Endothelial cell of umbilical vein (primary cell): ENCODE measurements at regions of chr22 and their contacts with region 1.

Region 1: GRCh38 chr22:38230108-38230825 is 28.5 kb downstream of the MAFF start:
- DNase-seq: peak; percentile 85
- H3K4me3 ChIP-seq: no peak overlapping the region
- H3K27ac ChIP-seq: peak overlapping the region; percentile 77
- H3K4me1 ChIP-seq: peaks cover 41% of the 10 kb centered on the region
- H3K27me3 ChIP-seq: no peaks in the 10 kb centered on the region
- CTCF ChIP-seq: peak; percentile 59 to 70
- POLR2A ChIP-seq: no peak

Region 2: DNA sequence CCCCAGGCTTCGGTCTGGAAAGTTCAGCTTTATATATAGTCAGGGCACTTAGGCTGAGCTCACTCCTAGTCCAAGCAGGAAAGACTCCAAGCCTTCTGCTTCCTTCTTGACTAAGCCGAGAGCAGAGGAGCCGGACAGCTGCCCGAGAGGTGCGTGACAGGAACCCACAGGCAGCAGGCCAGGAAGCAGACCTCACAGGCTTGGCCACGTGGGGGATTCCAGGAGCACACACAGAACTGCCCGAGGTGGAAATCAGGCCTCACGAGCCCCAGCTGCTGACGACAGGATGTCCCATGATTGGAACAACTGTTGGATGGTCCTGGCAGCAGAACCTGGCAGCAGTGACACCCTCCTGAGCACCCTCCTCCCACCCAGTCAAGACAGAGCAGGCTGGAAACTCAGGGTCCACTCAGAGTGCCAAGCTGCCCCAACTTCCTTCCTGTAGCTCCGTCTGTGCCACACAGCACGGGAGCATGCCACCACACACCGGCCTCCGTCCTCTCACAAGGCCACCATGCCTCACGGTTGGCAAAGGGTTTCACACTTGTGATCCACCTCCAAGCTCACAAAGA is 54.0 kb before region 1 on chr22:
- CTCF ChIA-PET with region 1: interaction called, 5 read pairs
- POLR2A ChIA-PET with region 1: no interaction called
- dilution Hi-C with region 1: no loop called
- intact Hi-C with region 1: loop called (anchors 2 kb)
- DNase-seq: peak; percentile 99
- H3K4me3 ChIP-seq: no peak overlapping the region
- H3K27ac ChIP-seq: peak overlapping the region; percentile 99
- H3K4me1 ChIP-seq: peaks cover 69% of the 10 kb centered on the region
- H3K27me3 ChIP-seq: no peaks in the 10 kb centered on the region
- CTCF ChIP-seq: no peak
- POLR2A ChIP-seq: no peak

Region 3: DNA sequence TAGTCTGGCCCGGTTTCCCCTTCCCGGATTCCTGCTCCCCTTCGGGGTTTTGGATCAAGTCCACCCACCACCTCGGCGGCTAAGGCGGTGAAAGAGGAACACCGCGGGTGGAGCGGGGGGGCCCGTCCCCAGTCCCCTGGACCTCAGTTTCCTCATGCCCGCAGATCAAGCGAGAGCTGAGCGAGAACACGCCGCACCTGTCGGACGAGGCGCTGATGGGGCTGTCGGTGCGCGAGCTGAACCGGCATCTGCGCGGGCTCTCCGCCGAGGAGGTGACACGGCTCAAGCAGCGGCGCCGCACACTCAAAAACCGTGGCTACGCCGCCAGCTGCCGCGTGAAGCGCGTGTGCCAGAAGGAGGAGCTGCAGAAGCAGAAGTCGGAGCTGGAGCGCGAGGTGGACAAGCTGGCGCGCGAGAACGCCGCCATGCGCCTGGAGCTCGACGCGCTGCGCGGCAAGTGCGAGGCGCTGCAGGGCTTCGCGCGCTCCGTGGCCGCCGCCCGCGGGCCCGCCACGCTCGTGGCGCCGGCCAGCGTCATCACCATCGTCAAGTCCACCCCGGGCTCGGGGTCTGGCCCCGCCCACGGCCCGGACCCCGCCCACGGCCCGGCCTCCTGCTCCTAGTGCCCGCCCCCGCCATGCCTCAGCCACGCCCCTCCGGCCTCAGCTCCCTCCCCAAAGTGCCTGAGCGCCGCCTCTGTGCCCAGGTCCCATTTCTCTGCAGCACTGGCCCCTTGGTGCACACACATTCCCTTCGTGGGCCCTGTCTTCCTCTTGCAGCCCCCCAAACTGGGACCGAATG is 15.8 kb before region 1 on chr22:
- CTCF ChIA-PET with region 1: interaction called, 44 read pairs
- POLR2A ChIA-PET with region 1: interaction called, 3 read pairs
- dilution Hi-C with region 1: no loop called
- intact Hi-C with region 1: loop called (anchors 1 kb)
- DNase-seq: peak; percentile 50
- H3K4me3 ChIP-seq: no peak overlapping the region
- H3K27ac ChIP-seq: no peak overlapping the region
- H3K4me1 ChIP-seq: peaks cover 27% of the 10 kb centered on the region
- H3K27me3 ChIP-seq: no peaks in the 10 kb centered on the region
- CTCF ChIP-seq: no peak
- POLR2A ChIP-seq: no peak

Region 4: DNA sequence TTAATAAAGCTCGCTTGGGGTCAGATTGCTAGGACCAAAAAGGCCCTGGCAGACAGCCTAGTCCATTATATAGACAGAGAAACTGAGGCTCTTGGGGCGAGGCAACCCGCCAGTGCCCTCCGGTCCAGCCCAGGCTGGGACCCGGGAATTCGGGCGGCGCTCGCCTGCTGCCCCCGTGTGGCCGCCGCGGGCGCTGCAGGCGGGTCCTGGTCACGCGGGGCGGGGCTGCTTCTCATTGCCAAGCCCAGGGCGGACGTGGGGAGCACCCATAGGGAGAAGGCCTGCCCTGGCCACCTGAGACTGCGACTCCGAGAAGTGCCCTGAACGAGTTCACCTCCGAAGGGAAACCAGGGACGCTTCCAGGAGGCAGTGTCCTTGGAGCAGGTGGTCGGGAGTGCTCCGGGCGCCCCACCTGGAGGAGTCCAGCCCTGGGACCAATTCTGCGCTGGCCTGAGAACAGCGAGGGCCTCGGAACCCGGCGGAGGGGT is 122.9 kb after region 1 on chr22:
- CTCF ChIA-PET with region 1: interaction called, 3 read pairs
- POLR2A ChIA-PET with region 1: no interaction called
- dilution Hi-C with region 1: no loop called
- intact Hi-C with region 1: loop called (anchors 10 kb)
- DNase-seq: peak; percentile 48
- H3K4me3 ChIP-seq: no peak overlapping the region
- H3K27ac ChIP-seq: no peak overlapping the region
- H3K4me1 ChIP-seq: no peaks in the 10 kb centered on the region
- H3K27me3 ChIP-seq: no peaks in the 10 kb centered on the region
- CTCF ChIP-seq: peak; percentile 93 to 99
- POLR2A ChIP-seq: no peak

Region 5: GRCh38 chr22:38461414-38462081 is 231.3 kb after region 1 on chr22:
- CTCF ChIA-PET with region 1: no interaction called
- POLR2A ChIA-PET with region 1: no interaction called
- dilution Hi-C with region 1: no loop called
- intact Hi-C with region 1: no loop called
- DNase-seq: peak; percentile 65
- H3K4me3 ChIP-seq: no peak overlapping the region
- H3K27ac ChIP-seq: no peak overlapping the region
- H3K4me1 ChIP-seq: no peaks in the 10 kb centered on the region
- H3K27me3 ChIP-seq: peaks cover 28 to 31% of the 10 kb centered on the region in 2 experiments
- CTCF ChIP-seq: no peak
- POLR2A ChIP-seq: no peak